HepG2 (cell line): ENCODE measurements at regions of chr13 and their contacts with region 1.

Region 1: GRCh38 chr13:110925023-110925612 is 10.2 kb upstream of the ANKRD10 start:
- DNase-seq: no peak
- ATAC-seq: no peak
- H3K4me3 ChIP-seq: no peak overlapping the region
- H3K27ac ChIP-seq: no peak overlapping the region
- H3K4me1 ChIP-seq: 0 out of 2 replicates have a peak, but pooled peaks cover 9% of the 10 kb centered on the region
- H3K27me3 ChIP-seq: peaks cover 0 to 26% of the 10 kb centered on the region in 2 experiments; a peak in 3 of 5 replicates
- CTCF ChIP-seq: peak; percentile 69
- EP300 ChIP-seq: no peak
- POLR2A ChIP-seq: no peak
- RAD21 ChIP-seq: 0 out of 2 replicates have a peak, but pooled peaks have one; percentile 27

Region 2: GRCh38 chr13:110444226-110444653 is 480.9 kb before region 1 on chr13:
- CTCF ChIA-PET with region 1: no interaction called
- POLR2A ChIA-PET with region 1: no interaction called
- in situ Hi-C with region 1: no loop called
- intact Hi-C with region 1: no loop called
- DNase-seq: no peak
- ATAC-seq: peak; percentile 55
- H3K4me3 ChIP-seq: no peak overlapping the region
- H3K27ac ChIP-seq: no peak overlapping the region
- H3K4me1 ChIP-seq: peaks cover 18% of the 10 kb centered on the region
- H3K27me3 ChIP-seq: peaks cover 4 to 52% of the 10 kb centered on the region in 2 experiments; a peak in 4 of 5 replicates
- CTCF ChIP-seq: peak; percentile 49
- EP300 ChIP-seq: no peak
- POLR2A ChIP-seq: no peak
- RAD21 ChIP-seq: no peak

Region 3: DNA sequence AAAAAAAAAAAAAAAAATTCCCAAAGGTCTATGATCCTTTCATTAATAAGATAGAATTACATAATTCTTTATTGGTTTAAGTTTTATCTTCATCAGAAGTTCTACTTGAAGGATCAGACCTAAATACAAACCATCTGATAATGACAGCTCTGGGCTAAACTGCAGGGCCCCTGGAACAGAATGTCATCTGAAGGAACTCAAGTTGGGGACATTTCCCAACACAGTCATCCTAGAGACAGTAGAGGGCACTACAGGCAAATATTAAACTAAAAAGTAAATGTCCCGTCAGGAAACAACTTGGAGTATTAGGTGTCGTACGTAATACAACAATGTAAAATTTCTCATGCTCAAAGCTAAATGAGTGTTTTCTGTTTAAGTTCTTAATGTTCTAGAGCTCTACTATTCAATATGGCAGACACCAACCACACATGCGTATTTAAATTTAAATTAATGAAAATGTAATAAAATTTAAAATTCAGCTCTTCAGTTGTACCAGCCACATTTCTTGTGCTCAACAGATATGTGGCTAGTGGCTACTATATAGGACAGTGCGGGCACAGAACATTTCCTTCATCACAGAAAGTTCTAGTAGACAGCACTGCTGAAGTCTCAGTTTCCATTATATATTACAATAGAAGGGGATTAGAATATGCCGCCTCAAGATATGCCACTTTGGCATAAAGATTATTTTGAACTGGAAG is 331.5 kb before region 1 on chr13:
- CTCF ChIA-PET with region 1: no interaction called
- POLR2A ChIA-PET with region 1: no interaction called
- in situ Hi-C with region 1: loop called (anchors 10 kb)
- intact Hi-C with region 1: loop called (anchors 10 kb)
- DNase-seq: peak; percentile 65
- ATAC-seq: peak; percentile 89
- H3K4me3 ChIP-seq: no peak overlapping the region
- H3K27ac ChIP-seq: no peak overlapping the region
- H3K4me1 ChIP-seq: peaks cover 19% of the 10 kb centered on the region
- H3K27me3 ChIP-seq: no peaks in the 10 kb centered on the region
- CTCF ChIP-seq: peak; percentile 75
- EP300 ChIP-seq: no peak
- POLR2A ChIP-seq: no peak
- RAD21 ChIP-seq: peak; percentile 36; the same call in 1 of the 2 replicates

Region 4: DNA sequence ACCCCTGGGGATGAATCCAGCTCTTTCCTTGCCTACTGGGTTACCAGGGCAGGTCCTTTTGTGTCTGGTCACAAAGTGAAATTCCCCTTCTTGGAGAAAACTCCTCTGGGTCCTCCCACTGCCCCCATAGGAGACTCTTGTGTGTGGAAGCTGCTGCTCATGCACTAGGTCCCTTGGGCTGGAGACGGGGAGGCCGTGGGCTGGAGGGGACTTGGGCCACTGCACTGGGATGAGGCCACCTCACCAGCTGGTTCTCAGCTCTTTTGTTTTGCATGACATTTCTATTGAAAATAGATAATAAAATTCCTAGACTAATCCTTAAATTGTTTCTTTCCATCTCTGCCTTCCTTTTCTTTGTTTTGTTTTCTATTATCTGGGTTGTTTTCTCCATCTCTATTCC is 457.8 kb after region 1 on chr13:
- CTCF ChIA-PET with region 1: no interaction called
- POLR2A ChIA-PET with region 1: no interaction called
- in situ Hi-C with region 1: no loop called
- intact Hi-C with region 1: no loop called
- DNase-seq: no peak
- ATAC-seq: no peak
- H3K4me3 ChIP-seq: no peak overlapping the region
- H3K27ac ChIP-seq: no peak overlapping the region
- H3K4me1 ChIP-seq: no peaks in the 10 kb centered on the region
- H3K27me3 ChIP-seq: peaks cover 5 to 7% of the 10 kb centered on the region in 2 experiments; a peak in 2 of 5 replicates
- CTCF ChIP-seq: no peak
- EP300 ChIP-seq: no peak
- POLR2A ChIP-seq: no peak
- RAD21 ChIP-seq: no peak

Region 5: GRCh38 chr13:111663953-111664421 is 738.9 kb after region 1 on chr13:
- CTCF ChIA-PET with region 1: no interaction called
- POLR2A ChIA-PET with region 1: no interaction called
- in situ Hi-C with region 1: no loop called
- intact Hi-C with region 1: no loop called
- DNase-seq: no peak
- ATAC-seq: 0 out of 3 replicates have a peak, but pooled peaks have one; percentile 33
- H3K4me3 ChIP-seq: no peak overlapping the region
- H3K27ac ChIP-seq: no peak overlapping the region
- H3K4me1 ChIP-seq: no peaks in the 10 kb centered on the region
- H3K27me3 ChIP-seq: peaks cover 1 to 10% of the 10 kb centered on the region in 2 experiments; a peak in 4 of 5 replicates
- CTCF ChIP-seq: no peak
- EP300 ChIP-seq: no peak
- POLR2A ChIP-seq: no peak
- RAD21 ChIP-seq: no peak

Region 6: DNA sequence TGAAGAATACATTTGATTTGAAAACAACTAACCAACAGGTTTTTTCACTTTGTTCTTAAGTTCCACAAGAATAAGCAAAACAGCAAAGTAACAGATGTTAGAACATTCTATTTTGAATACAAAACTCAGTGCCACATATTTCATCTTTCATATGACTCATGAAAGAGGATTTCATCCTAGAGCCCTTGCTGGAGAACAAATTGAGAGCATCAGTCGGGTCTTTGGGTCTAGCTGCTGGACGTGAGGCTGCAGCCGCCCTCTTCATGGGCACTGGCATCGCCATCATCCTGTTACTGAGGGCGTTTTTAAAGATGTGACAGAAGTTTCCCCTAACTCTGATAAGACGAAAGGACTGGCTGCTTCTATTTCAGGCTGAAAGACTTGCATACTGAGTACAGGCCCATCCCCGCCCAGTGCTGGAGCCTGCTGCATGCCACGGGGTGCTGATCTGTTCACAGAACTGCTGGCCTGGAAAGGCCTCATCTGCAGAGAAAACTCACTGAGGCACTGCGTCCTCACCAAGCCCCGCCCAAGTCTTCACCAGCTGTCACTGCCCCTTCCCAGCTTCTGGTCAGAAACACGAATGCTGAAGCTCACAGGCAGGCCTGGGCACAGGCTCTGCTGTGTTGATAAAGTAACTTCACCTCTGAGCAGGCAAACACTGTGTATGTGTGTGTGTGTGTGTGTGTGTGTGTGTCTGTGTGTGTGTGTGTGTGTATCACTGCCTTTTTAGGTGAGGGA is 1561.4 kb after region 1 on chr13:
- CTCF ChIA-PET with region 1: no interaction called
- POLR2A ChIA-PET with region 1: no interaction called
- in situ Hi-C with region 1: no loop called
- intact Hi-C with region 1: no loop called
- DNase-seq: no peak
- ATAC-seq: no peak
- H3K4me3 ChIP-seq: no peak overlapping the region
- H3K27ac ChIP-seq: no peak overlapping the region
- H3K4me1 ChIP-seq: no peaks in the 10 kb centered on the region
- H3K27me3 ChIP-seq: no peaks in the 10 kb centered on the region; a peak in 1 of 5 replicates
- CTCF ChIP-seq: no peak
- EP300 ChIP-seq: no peak
- POLR2A ChIP-seq: no peak
- RAD21 ChIP-seq: no peak